OCI-LY7 (cell line): ENCODE measurements at regions of chr5 and their contacts with region 1.

Region 1: DNA sequence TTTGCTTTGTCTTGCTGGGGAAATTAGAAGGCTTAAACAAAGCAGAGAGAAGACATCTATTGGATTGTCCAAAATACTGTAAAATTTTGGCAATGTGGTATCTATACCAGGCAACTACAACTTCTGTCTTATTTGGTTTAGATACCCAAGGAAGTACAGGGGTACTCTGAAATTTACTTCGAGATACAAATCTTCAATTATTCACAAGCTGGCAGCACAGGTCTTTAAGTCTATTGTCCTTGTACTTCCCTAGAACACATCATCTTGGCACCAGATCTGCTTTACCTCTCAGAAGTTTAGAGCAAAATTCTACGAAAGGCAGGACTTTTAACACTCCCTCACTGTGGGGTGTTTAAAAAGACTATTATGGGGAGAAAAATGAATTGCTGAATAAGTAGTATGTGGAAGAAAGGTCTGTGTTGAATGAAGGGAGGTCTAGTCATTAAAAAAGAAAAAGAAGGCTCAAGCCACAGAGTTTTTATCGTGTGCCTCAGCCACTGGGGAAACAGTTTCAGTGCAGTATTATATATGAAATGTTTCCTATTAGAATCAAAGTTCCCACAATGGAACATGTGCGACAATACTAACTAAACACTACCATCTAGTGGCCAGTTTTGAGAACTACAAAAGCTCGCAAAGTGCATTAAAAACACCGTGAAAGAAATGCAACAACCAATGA is 93.7 kb downstream of the PDE4D start:
- DNase-seq: peak; percentile 78
- H3K4me3 ChIP-seq: peak overlapping the region; percentile 55
- H3K27ac ChIP-seq: peak overlapping the region; percentile 59
- H3K4me1 ChIP-seq: peaks cover 43% of the 10 kb centered on the region
- CTCF ChIP-seq: peak; percentile 91

Region 2: DNA sequence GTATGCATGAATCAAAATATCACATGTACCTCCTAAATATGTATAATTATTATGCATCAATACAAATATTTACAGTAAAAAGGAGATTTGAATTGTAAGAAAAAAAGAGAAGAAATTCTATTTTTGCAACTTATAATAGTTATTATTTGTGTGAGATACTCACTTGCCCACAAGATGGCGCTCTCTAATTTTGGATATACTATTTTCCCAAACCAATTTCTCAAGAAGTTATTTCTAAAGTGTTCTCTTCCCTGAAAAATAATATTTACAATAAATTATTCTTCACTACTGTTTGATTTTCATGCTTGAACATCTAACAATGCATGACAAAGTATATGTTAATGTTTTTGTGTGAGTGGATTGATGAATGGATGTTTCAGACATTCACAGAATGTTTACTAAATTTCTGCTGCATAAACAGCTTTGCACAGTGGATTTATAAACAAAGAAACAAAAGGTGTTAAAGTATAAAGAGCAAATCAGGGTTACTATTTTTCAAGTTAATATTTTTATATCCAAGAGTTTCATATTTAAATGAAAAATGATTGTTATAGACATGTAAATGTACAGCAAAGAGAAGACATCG is 409.6 kb before region 1 on chr5:
- CTCF ChIA-PET with region 1: no interaction called
- POLR2A ChIA-PET with region 1: interaction called, 3 read pairs
- intact Hi-C with region 1: loop called (anchors 2 kb)
- DNase-seq: peak; percentile 50
- H3K4me3 ChIP-seq: no peak overlapping the region
- H3K27ac ChIP-seq: no peak overlapping the region
- H3K4me1 ChIP-seq: no peaks in the 10 kb centered on the region
- CTCF ChIP-seq: peak; percentile 96

Region 3: DNA sequence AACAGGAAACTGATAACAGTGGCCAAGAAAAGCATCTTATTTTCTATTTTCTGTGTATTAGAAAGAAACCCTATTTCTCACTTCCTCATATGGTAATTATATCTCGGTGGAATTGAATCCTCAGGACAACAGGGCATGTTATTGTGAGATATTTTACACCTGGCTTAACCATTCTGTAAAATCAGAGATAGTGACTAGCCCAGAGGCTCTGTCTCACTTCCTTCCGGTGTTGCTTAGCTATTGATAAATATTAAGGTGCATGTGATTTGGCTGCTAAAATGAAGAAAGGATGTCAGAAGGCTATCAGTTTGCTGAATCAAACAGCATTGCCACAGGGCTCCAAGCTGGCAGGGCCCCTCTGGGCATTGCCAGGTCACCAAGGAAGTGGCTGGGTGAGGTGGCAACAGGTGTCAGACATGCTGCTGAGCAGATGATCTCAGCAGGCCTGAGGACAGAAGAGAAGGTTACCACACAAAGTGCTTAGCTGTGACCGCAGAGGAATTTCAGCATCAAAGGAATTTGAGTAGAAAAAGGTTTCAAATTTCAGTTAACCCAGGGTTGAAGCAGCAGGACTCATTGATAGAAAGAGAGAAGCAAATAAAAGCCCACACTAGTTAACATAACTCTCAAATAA is 236.9 kb before region 1 on chr5:
- CTCF ChIA-PET with region 1: no interaction called
- POLR2A ChIA-PET with region 1: no interaction called
- intact Hi-C with region 1: loop called (anchors 5 kb)
- DNase-seq: peak; percentile 82
- H3K4me3 ChIP-seq: peak overlapping the region; percentile 27
- H3K27ac ChIP-seq: peak overlapping the region; percentile 84
- H3K4me1 ChIP-seq: peaks cover 60% of the 10 kb centered on the region
- CTCF ChIP-seq: no peak

Region 4: GRCh38 chr5:59724482-59725391 is 75.1 kb before region 1 on chr5:
- CTCF ChIA-PET with region 1: no interaction called
- POLR2A ChIA-PET with region 1: interaction called, 3 read pairs
- intact Hi-C with region 1: loop called (anchors 1 kb)
- DNase-seq: peak; percentile 55
- H3K4me3 ChIP-seq: no peak overlapping the region
- H3K27ac ChIP-seq: no peak overlapping the region
- H3K4me1 ChIP-seq: no peaks in the 10 kb centered on the region
- CTCF ChIP-seq: peak; percentile 90

Region 5: DNA sequence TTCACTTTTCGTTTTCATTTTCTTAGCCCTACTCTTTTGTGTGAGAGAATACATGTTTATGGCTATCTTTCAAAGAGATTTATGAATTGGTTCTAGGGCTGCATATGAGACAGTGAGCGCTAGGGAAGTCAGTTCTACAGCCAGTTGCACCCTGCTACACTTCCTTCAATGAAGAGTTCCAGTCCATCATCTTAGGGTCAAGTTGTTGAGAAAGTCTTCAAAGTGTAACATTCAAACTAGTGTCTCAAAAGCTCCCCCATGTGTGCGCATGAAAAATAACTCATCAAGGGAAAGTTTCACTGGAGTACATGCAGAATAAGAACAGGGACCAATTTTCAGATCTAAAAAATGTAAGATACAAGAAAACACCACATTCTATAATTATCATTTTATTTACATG is 582.9 kb after region 1 on chr5:
- CTCF ChIA-PET with region 1: no interaction called
- POLR2A ChIA-PET with region 1: no interaction called
- intact Hi-C with region 1: loop called (anchors 10 kb)
- DNase-seq: peak; percentile 17
- H3K4me3 ChIP-seq: no peak overlapping the region
- H3K27ac ChIP-seq: no peak overlapping the region
- H3K4me1 ChIP-seq: no peaks in the 10 kb centered on the region
- CTCF ChIP-seq: peak; percentile 72